HepG2 (cell line): ENCODE measurements at regions of chr12 and their contacts with region 1.

Region 1: GRCh38 chr12:27243804-27244683 is at the start of gene STK38L:
- DNase-seq: peak; percentile 91
- ATAC-seq: peak; percentile 99
- H3K4me3 ChIP-seq: peak within 1 kb of the TSS; percentile 70 to 86 (median 76)
- H3K27ac ChIP-seq: peak within 1 kb of the TSS; percentile 76
- H3K4me1 ChIP-seq: peaks cover 32% of the 10 kb centered on the region
- H3K27me3 ChIP-seq: no peaks in the 10 kb centered on the region; a peak in 1 of 5 replicates
- CTCF ChIP-seq: peak; percentile 66
- EP300 ChIP-seq: no peak
- POLR2A ChIP-seq: peak; percentile 93 to 95
- RAD21 ChIP-seq: peak; percentile 78
- total RNA-seq, gene STK38L: 26.4 and 50.0 TPM in 2 replicates

Region 2: GRCh38 chr12:27293463-27293862 is 49.4 kb after region 1 on chr12:
- CTCF ChIA-PET with region 1: no interaction called
- POLR2A ChIA-PET with region 1: no interaction called
- in situ Hi-C with region 1: no loop called
- intact Hi-C with region 1: loop called (anchors 5 kb)
- DNase-seq: no peak
- ATAC-seq: no peak
- H3K4me3 ChIP-seq: no peak overlapping the region
- H3K27ac ChIP-seq: no peak overlapping the region
- H3K4me1 ChIP-seq: peaks cover 26% of the 10 kb centered on the region
- H3K27me3 ChIP-seq: no peaks in the 10 kb centered on the region
- CTCF ChIP-seq: no peak
- EP300 ChIP-seq: no peak
- POLR2A ChIP-seq: no peak
- RAD21 ChIP-seq: no peak